GM10248 (cell line): ENCODE measurements at regions of chr1 and their contacts with region 1.

Region 1: GRCh38 chr1:115595279-115596079 is 46.3 kb upstream of the VANGL1 start:
- DNase-seq: peak; percentile 68
- CTCF ChIP-seq: peak; percentile 97

Region 2: GRCh38 chr1:115138968-115139367 is 456.5 kb before region 1 on chr1:
- CTCF ChIA-PET with region 1: interaction called, 124 read pairs
- POLR2A ChIA-PET with region 1: no interaction called
- DNase-seq: peak; percentile 79
- CTCF ChIP-seq: peak; percentile 90

Region 3: GRCh38 chr1:115337633-115338456 is 257.6 kb before region 1 on chr1 and contains the start of gene NGF:
- CTCF ChIA-PET with region 1: no interaction called
- POLR2A ChIA-PET with region 1: no interaction called
- DNase-seq: peak; percentile 12
- CTCF ChIP-seq: no peak

Region 4: DNA sequence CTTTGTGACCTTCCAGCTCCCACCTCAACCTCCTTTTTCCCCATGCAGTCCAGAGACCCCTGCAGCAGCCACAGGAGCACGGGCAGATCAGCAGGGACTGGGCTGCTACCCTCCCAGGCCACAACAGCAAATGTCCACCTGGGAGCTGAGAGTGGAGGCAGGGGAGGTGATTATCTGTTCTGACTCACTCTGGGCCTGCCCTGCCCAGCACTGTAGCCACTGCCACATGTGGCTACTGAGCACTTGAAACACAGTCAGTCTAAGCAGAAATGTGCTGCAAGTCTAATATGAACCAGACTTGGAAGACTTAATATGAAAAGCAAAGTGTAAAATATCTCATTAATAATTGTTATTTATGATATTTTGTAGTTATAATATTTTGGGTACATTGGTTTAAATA is 102.6 kb before region 1 on chr1:
- CTCF ChIA-PET with region 1: no interaction called
- POLR2A ChIA-PET with region 1: no interaction called
- DNase-seq: no peak
- CTCF ChIP-seq: no peak

Region 5: GRCh38 chr1:115609021-115609420 is 13.5 kb after region 1 on chr1:
- CTCF ChIA-PET with region 1: interaction called, 10 read pairs
- POLR2A ChIA-PET with region 1: no interaction called
- DNase-seq: no peak
- CTCF ChIP-seq: no peak